ENCODE measurements at regions of chr13 and their contacts with region 1.

Region 1: DNA sequence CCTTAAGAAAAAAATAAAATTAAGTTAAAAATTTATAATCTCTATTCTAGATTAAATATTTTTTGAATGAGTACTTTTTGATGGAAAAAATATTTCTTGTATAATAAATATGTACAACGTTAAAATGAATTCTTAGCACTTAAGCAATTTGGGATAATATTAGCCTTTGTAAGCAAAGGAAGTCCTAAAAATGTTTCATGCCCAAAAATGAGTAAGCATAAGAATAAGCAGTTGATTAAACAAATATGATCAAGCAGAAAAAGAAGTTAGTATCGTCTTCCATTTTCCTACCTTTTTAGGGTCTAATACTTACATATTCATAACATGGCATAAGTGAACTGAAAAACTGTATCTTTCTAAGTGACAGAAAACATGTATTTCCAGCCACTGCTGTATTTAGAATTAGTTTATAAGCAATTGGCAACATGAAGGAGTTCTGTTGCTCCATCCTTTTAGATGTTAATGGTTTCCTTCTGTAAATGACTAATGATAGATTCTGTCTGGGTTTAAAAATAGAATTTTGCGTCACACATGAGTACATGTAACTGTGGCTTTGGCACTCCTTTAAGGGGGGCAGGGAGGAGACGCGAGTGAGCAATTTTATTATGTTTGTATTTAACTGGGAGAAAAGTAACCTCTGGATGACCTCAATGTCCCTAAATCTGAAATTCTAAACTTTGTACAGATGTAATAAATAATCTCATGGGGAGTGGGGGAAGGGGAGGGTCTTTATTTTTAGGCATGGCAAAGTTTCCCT is 237.4 kb downstream of the RGCC start:
- DNase-seq: peak; percentile 21 to 80
- ATAC-seq: peak; percentile 88 to 97 (median 96)
- H3K4me3 ChIP-seq: peak overlapping the region in 4 of 10 donors; percentile 15 to 22 (median 16)
- H3K27ac ChIP-seq: peak overlapping the region; percentile 49 to 85 (median 74)
- H3K4me1 ChIP-seq: peaks cover 0 to 41% (median 24%) of the 10 kb centered on the region in 9 donors
- H3K27me3 ChIP-seq: no peaks in the 10 kb centered on the region
- CTCF ChIP-seq: no peak

Region 2: GRCh38 chr13:40340368-40341095 is 1354.2 kb before region 1 on chr13:
- intact Hi-C with region 1: no loop called
- DNase-seq: no peak
- ATAC-seq: no peak
- H3K4me3 ChIP-seq: no peak overlapping the region
- H3K27ac ChIP-seq: no peak overlapping the region
- H3K4me1 ChIP-seq: peaks cover 0 to 34% (median 22%) of the 10 kb centered on the region in 9 donors
- H3K27me3 ChIP-seq: no peaks in the 10 kb centered on the region
- CTCF ChIP-seq: no peak

Region 3: DNA sequence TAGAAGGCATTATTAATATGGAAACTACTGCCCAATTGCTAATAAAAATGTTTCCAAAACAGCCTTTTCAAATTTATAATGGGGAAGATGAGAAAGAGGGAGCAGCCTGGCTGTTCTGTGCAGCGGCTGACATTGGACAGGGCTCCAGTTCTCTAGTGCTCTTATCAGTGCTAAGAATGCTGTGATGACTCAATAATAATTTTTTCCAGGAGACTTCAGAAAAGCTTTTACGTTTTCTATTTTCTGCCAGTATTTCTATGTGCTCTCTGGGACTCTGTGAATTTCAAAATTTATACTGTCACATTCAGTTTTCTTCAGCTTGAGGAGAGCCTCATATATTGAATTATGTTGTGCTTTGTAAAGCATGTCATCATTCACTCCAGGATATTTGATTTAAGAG is 56.6 kb after region 1 on chr13:
- intact Hi-C with region 1: loop called in 1 of 10 experiments (anchors 10 kb)
- DNase-seq: peak in 1 of 2 donors; percentile 35
- ATAC-seq: peak; percentile 87 to 97 (median 94)
- H3K4me3 ChIP-seq: no peak overlapping the region
- H3K27ac ChIP-seq: peak overlapping the region in 8 of 10 donors; percentile 5 to 80 (median 64)
- H3K4me1 ChIP-seq: peaks cover 2 to 34% (median 14%) of the 10 kb centered on the region in 9 donors
- H3K27me3 ChIP-seq: no peaks in the 10 kb centered on the region
- CTCF ChIP-seq: no peak

Region 4: GRCh38 chr13:42696191-42696590 is 1001.5 kb after region 1 on chr13:
- intact Hi-C with region 1: no loop called
- DNase-seq: no peak
- ATAC-seq: no peak
- H3K4me3 ChIP-seq: no peak overlapping the region
- H3K27ac ChIP-seq: no peak overlapping the region
- H3K4me1 ChIP-seq: no peaks in the 10 kb centered on the region
- H3K27me3 ChIP-seq: no peaks in the 10 kb centered on the region
- CTCF ChIP-seq: no peak

Measured in heart right ventricle (tissue), 16 donors.